ENCODE measurements at regions of chr14 and their contacts with region 1.

Region 1: DNA sequence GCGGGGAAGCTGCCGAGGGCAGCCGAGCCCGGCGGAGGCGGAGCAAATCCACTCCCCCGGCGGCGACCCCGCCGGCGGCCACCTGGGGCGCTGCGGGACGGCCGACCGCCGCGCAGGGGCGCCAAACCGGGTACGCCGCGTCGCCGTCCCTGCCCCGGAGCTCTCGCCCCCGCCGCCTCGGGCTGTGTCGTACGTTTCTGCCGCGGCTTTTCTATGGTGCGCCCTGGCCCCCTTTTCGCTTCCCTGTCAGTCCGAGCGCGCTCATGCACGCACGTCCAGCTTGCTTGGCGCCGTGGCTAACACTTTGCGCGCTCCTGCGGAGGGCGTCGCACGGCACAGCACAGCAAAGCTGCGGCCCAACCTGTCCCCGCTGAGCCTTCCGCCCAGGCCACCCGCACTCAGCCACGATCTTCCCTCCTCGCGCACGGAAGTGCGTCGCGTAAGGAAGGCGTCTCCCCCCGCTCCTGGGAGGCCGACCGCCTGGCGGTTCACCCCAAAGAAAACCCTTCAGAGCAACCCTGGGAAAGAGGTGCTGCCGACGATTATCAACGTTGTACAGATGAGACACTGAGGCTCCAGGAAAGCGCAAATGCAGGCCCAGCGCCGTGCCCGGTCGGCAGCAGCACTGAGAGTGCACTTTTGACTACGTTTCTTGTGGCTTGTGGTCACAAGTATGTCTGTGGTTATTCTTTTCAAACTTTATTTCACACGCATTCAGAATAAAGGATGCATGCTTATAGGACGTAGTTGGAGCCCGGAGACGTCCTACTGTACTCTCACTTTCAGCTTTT is at the start of gene HECTD1:
- DNase-seq: peak; percentile 85
- H3K4me3 Mint-ChIP-seq: peak within 1 kb of the TSS; percentile 95
- H3K27ac Mint-ChIP-seq: peak within 1 kb of the TSS; percentile 100
- H3K4me1 Mint-ChIP-seq: peaks cover 45% of the 10 kb centered on the region
- H3K27me3 Mint-ChIP-seq: peaks cover 3% of the 10 kb centered on the region
- total RNA-seq, gene HECTD1: 118 and 127 TPM in 2 replicates

Region 2: GRCh38 chr14:30982533-30982932 is 225.4 kb before region 1 on chr14:
- intact Hi-C with region 1: loop called (anchors 5 kb)
- DNase-seq: no peak
- H3K4me3 Mint-ChIP-seq: no peak overlapping the region
- H3K27ac Mint-ChIP-seq: no peak overlapping the region
- H3K4me1 Mint-ChIP-seq: no peaks in the 10 kb centered on the region
- H3K27me3 Mint-ChIP-seq: no peaks in the 10 kb centered on the region

Region 3: GRCh38 chr14:31270196-31270772 is 62.3 kb after region 1 on chr14:
- intact Hi-C with region 1: loop called (anchors 5 kb)
- DNase-seq: no peak
- H3K4me3 Mint-ChIP-seq: no peak overlapping the region
- H3K27ac Mint-ChIP-seq: no peak overlapping the region
- H3K4me1 Mint-ChIP-seq: peaks cover 12% of the 10 kb centered on the region
- H3K27me3 Mint-ChIP-seq: peaks cover 1% of the 10 kb centered on the region

Region 4: GRCh38 chr14:31420319-31421111 is 212.6 kb after region 1 on chr14 and contains the start of gene HEATR5A:
- intact Hi-C with region 1: loop called (anchors 1 kb)
- DNase-seq: peak; percentile 92
- H3K4me3 Mint-ChIP-seq: peak within 1 kb of the TSS; percentile 98
- H3K27ac Mint-ChIP-seq: peak within 1 kb of the TSS; percentile 90
- H3K4me1 Mint-ChIP-seq: peaks cover 26% of the 10 kb centered on the region
- H3K27me3 Mint-ChIP-seq: peaks cover 2% of the 10 kb centered on the region
- total RNA-seq, gene HEATR5A: 26.4 and 31.0 TPM in 2 replicates

Region 5: GRCh38 chr14:31937721-31938346 is 729.9 kb after region 1 on chr14:
- intact Hi-C with region 1: loop called (anchors 5 kb)
- DNase-seq: peak; percentile 64
- H3K4me3 Mint-ChIP-seq: no peak overlapping the region
- H3K27ac Mint-ChIP-seq: peak overlapping the region; percentile 7
- H3K4me1 Mint-ChIP-seq: peaks cover 10% of the 10 kb centered on the region
- H3K27me3 Mint-ChIP-seq: peaks cover 3% of the 10 kb centered on the region